T-cell (primary cell): ENCODE measurements at regions of chr18 and their contacts with region 1.

Region 1: DNA sequence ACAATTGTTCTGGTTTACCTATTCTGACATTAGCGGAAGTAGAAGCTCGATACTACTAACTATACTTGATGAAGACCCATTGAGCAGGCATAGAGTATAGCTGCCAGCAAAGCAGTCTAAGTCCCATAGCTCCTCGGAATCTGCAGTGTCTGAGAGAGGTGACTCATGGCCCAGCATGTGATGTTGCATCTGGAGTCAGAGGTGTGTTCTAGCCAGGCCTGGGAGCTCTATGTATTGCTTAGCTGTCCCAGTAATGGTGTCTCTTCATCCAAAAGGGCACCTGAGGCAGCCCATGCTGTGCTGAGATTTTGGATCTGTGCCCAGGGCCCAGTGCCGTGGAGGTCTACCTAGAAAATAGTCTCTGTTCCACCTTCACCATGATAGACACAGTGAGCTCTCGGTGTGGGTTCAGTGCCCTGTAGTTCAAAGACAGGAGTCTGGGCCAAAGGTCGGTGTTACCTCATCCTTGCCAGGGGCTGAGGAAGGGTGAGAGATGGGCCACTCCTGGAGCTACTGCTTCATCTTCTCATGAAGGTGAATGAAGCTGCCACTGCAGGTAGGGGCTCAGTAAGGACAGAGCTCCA is 47.3 kb downstream of the MEX3C start:
- DNase-seq: no peak
- ATAC-seq: no peak
- H3K4me3 ChIP-seq: no peak overlapping the region
- H3K4me3 Mint-ChIP-seq: no peak overlapping the region
- H3K27ac ChIP-seq: no peak overlapping the region
- H3K27ac Mint-ChIP-seq: peak overlapping the region; percentile 4 to 11
- H3K4me1 ChIP-seq: peaks cover 12 to 40% of the 10 kb centered on the region in 2 experiments
- H3K4me1 Mint-ChIP-seq: peaks cover 35 to 41% (median 37%) of the 10 kb centered on the region in 3 donors
- H3K27me3 ChIP-seq: peaks cover 0 to 2% of the 10 kb centered on the region in 2 experiments
- H3K27me3 Mint-ChIP-seq: no peaks in the 10 kb centered on the region

Region 2: GRCh38 chr18:50836521-50836957 is 313.7 kb before region 1 on chr18:
- CTCF ChIA-PET with region 1: interaction called in 1 of 2 experiments, 10 read pairs
- POLR2A ChIA-PET with region 1: no interaction called
- DNase-seq: no peak
- ATAC-seq: no peak
- H3K4me3 ChIP-seq: no peak overlapping the region
- H3K4me3 Mint-ChIP-seq: no peak overlapping the region
- H3K27ac ChIP-seq: no peak overlapping the region
- H3K27ac Mint-ChIP-seq: no peak overlapping the region
- H3K4me1 ChIP-seq: no peaks in the 10 kb centered on the region
- H3K4me1 Mint-ChIP-seq: peaks cover 2 to 6% (median 4%) of the 10 kb centered on the region in 3 donors
- H3K27me3 ChIP-seq: no peaks in the 10 kb centered on the region
- H3K27me3 Mint-ChIP-seq: peaks cover 6 to 10% of the 10 kb centered on the region in 2 donors

Region 3: GRCh38 chr18:51120809-51121596 is 29.2 kb before region 1 on chr18:
- CTCF ChIA-PET with region 1: no interaction called
- POLR2A ChIA-PET with region 1: no interaction called
- DNase-seq: no peak
- ATAC-seq: no peak
- H3K4me3 ChIP-seq: no peak overlapping the region
- H3K4me3 Mint-ChIP-seq: no peak overlapping the region
- H3K27ac ChIP-seq: no peak overlapping the region
- H3K27ac Mint-ChIP-seq: no peak overlapping the region
- H3K4me1 ChIP-seq: no peaks in the 10 kb centered on the region
- H3K4me1 Mint-ChIP-seq: no peaks in the 10 kb centered on the region
- H3K27me3 ChIP-seq: peaks cover 0 to 8% of the 10 kb centered on the region in 2 experiments
- H3K27me3 Mint-ChIP-seq: peaks cover 0 to 3% of the 10 kb centered on the region in 2 donors